ENCODE measurements at regions of chr2 and their contacts with region 1.

Region 1: GRCh38 chr2:38274286-38275276 is 102.5 kb downstream of the ATL2 start:
- DNase-seq: peak; percentile 59
- ATAC-seq: peak; percentile 94
- H3K4me3 ChIP-seq: no peak overlapping the region
- H3K27ac ChIP-seq: no peak overlapping the region; the same call in 1 of the 2 replicates
- H3K4me1 ChIP-seq: no peaks in the 10 kb centered on the region
- H3K27me3 ChIP-seq: no peaks in the 10 kb centered on the region
- CTCF ChIP-seq: peak; percentile 67; the same call in 1 of the 2 replicates

Region 2: DNA sequence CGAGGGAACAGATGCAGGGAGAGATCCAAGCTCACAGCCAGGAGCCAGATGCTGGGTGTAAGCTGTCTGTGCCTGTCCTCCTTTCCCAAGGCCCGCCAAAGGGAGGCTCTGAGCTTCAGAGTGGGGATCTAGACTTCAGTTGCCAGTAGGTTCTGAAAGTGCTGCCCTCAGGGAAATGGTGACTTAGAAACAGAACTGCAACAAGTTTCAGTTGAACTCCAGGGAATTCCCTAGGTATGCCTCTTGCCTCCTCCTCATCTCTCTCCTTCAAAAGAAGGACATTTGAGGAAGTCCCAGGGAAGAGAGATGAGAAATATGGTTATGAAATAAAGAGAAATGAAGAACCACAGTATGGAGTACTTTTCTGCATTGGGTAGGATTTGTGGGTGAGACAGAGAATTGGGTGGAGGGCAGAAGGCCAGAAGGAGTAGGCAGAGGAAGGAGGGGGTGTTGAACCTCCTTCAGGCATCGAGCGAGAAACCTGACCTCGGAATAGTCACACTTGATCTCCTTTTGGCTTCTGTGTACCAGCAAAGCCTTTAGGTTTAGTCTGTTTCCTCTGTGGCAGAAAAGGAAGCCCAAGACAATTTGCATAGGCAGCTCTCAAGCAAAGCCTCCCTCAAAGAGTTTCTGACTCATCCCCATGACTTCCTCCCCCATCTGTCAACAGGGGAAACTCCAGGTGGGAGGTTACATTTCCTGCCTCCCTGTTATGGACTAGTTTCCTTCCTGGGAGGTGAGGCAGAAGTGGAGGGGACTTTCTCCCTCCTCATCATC is 884.4 kb before region 1 on chr2:
- CTCF ChIA-PET with region 1: interaction called, 3 read pairs
- POLR2A ChIA-PET with region 1: no interaction called
- in situ Hi-C with region 1: no loop called
- intact Hi-C with region 1: loop called (anchors 10 kb)
- DNase-seq: no peak
- ATAC-seq: peak; percentile 84
- H3K4me3 ChIP-seq: no peak overlapping the region
- H3K27ac ChIP-seq: no peak overlapping the region
- H3K4me1 ChIP-seq: no peaks in the 10 kb centered on the region
- H3K27me3 ChIP-seq: no peaks in the 10 kb centered on the region
- CTCF ChIP-seq: no peak

Region 3: DNA sequence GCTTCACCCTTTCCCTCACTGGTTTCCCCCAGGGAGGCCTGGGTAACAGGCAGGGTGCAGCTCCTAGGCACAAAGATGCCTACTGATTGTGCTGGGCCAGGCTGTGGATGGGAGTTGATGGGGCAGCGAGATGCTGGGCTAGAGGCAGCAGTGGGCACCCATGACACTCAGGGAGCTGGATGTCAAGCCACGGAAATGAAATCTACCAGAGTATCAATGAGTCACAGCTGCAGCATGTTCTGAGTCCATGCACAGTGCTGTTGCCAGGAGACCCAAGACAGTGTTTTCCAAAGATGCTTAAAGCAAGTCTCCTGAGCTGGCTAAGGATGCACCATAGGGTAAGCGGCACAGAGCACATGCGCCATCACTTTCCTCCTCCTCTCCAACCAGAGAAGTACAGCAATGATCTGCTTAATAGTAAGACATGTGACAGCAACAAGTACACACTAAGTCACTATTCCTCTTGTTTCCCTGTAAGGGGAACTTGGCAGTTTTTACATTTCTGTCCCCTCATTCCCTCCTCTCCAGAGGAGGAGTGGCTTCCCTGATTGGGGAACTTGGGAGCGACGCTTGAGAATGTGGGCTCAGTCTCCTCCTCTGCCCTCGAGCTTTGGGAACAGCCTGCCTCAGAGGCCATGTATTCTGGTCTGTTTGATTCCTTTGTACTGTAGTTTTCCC is 660.4 kb before region 1 on chr2:
- CTCF ChIA-PET with region 1: no interaction called
- POLR2A ChIA-PET with region 1: no interaction called
- in situ Hi-C with region 1: no loop called
- intact Hi-C with region 1: no loop called
- DNase-seq: no peak
- ATAC-seq: peak; percentile 42; the same call in 1 of the 2 replicates
- H3K4me3 ChIP-seq: no peak overlapping the region
- H3K27ac ChIP-seq: no peak overlapping the region
- H3K4me1 ChIP-seq: no peaks in the 10 kb centered on the region
- H3K27me3 ChIP-seq: no peaks in the 10 kb centered on the region
- CTCF ChIP-seq: no peak

Region 4: GRCh38 chr2:37982147-37982582 is 292.4 kb before region 1 on chr2:
- CTCF ChIA-PET with region 1: interaction called, 9 read pairs
- POLR2A ChIA-PET with region 1: no interaction called
- in situ Hi-C with region 1: no loop called
- intact Hi-C with region 1: loop called (anchors 1 kb)
- DNase-seq: peak; percentile 47
- ATAC-seq: peak; percentile 84
- H3K4me3 ChIP-seq: peak overlapping the region; percentile 14 to 29; a peak in 2 of 4 replicates
- H3K27ac ChIP-seq: peak overlapping the region; percentile 45; the same call in 1 of the 2 replicates
- H3K4me1 ChIP-seq: peaks cover 5% of the 10 kb centered on the region; the same call in 1 of the 2 replicates
- H3K27me3 ChIP-seq: no peaks in the 10 kb centered on the region
- CTCF ChIP-seq: peak; percentile 90

Region 5: DNA sequence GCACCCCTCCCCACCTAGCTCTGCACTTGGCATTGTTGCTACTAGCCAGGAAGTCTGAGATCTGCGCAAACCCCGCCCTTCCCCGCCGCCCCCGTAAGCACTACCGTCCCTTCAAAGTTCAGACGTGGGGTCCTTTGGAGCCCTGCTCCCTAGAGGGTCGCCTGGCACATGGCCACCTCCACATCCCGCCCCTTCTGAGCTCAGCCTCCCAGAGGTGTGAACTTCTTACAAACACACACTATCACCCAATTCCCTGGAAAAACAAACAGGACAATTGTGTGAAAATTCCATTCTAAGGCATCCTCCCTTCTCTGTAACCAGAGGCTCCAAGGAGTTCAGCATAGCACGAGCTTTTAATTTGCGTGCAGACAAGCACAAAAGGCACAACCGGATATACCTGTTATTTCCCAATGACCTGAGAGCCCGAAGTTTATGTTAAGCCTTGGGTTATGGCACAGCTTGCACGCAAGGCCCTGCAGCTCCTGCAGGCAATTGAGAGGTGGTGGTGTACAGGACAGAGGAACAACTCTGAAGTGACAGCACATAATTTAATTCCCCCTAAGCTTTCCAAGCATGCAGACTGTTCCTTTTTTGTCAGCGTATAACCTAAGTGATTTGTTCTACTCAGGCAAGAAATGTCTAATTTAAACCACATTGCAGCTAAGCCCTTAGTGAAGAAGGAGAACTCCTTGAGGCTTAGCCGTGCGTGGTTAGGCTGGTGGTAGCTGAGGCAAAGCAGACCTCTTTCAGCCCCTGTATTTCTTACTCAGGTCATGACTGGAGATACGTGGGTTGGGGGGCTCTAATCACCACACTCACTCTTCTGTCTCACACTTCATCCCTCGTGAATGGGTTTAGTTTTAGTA is 178.4 kb before region 1 on chr2:
- CTCF ChIA-PET with region 1: interaction called, 16 read pairs
- POLR2A ChIA-PET with region 1: no interaction called
- in situ Hi-C with region 1: no loop called
- intact Hi-C with region 1: no loop called
- DNase-seq: no peak
- ATAC-seq: peak; percentile 80
- H3K4me3 ChIP-seq: peak overlapping the region; percentile 10 to 50
- H3K27ac ChIP-seq: peak overlapping the region; percentile 98
- H3K4me1 ChIP-seq: peaks cover 76% of the 10 kb centered on the region
- H3K27me3 ChIP-seq: no peaks in the 10 kb centered on the region
- CTCF ChIP-seq: no peak

Region 6: DNA sequence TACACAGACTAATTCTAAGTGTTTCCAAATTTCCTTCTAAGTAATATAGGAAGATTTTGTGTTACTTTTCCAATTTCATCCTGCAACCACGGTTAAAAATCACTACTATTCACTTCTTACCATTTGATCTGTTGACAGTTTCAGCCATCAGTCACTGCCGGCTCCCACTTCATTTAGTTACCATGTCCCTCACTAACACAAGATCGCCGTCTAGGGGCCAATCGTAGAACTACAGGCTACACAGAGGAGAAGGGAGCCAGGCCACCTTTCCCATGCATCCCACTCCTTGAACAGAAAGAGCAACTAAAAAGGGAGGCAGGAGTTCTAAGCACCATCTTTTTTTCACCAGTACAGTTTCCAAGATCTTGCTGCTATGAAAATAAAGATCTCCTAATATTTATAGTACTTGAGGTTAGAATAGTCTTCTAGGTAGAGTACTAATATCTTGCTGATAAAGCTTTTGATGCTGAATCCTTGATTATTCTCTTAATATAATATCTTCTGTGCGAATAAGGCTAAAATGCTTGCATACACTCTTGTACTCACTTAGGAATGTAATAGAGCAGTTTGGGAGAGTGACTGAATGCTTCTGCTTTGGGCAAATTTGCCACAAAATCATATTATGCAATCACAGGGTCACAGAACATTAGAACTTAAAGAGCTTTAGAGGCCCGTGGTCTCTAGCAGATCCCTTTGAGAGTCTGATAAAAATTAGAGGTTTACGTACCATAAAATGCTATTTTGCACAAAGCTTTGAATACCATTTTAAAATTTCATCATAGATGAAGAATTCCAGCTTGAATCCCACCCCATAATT is 159.2 kb before region 1 on chr2:
- CTCF ChIA-PET with region 1: interaction called, 4 read pairs
- POLR2A ChIA-PET with region 1: no interaction called
- in situ Hi-C with region 1: no loop called
- intact Hi-C with region 1: loop called (anchors 2 kb)
- DNase-seq: peak; percentile 69
- ATAC-seq: peak; percentile 98
- H3K4me3 ChIP-seq: no peak overlapping the region
- H3K27ac ChIP-seq: peak overlapping the region; percentile 48; the same call in 1 of the 2 replicates
- H3K4me1 ChIP-seq: peaks cover 20% of the 10 kb centered on the region; the same call in 1 of the 2 replicates
- H3K27me3 ChIP-seq: no peaks in the 10 kb centered on the region
- CTCF ChIP-seq: peak; percentile 99

Region 7: GRCh38 chr2:38315707-38316333 is 41.2 kb after region 1 on chr2:
- CTCF ChIA-PET with region 1: interaction called, 10 read pairs
- POLR2A ChIA-PET with region 1: no interaction called
- in situ Hi-C with region 1: no loop called
- intact Hi-C with region 1: no loop called
- DNase-seq: peak; percentile 30
- ATAC-seq: peak; percentile 88
- H3K4me3 ChIP-seq: no peak overlapping the region
- H3K27ac ChIP-seq: no peak overlapping the region
- H3K4me1 ChIP-seq: no peaks in the 10 kb centered on the region
- H3K27me3 ChIP-seq: no peaks in the 10 kb centered on the region
- CTCF ChIP-seq: peak; percentile 74; the same call in 1 of the 2 replicates